Keratinocyte (primary cell): ENCODE measurements at regions of chr7 and their contacts with region 1.

Region 1: DNA sequence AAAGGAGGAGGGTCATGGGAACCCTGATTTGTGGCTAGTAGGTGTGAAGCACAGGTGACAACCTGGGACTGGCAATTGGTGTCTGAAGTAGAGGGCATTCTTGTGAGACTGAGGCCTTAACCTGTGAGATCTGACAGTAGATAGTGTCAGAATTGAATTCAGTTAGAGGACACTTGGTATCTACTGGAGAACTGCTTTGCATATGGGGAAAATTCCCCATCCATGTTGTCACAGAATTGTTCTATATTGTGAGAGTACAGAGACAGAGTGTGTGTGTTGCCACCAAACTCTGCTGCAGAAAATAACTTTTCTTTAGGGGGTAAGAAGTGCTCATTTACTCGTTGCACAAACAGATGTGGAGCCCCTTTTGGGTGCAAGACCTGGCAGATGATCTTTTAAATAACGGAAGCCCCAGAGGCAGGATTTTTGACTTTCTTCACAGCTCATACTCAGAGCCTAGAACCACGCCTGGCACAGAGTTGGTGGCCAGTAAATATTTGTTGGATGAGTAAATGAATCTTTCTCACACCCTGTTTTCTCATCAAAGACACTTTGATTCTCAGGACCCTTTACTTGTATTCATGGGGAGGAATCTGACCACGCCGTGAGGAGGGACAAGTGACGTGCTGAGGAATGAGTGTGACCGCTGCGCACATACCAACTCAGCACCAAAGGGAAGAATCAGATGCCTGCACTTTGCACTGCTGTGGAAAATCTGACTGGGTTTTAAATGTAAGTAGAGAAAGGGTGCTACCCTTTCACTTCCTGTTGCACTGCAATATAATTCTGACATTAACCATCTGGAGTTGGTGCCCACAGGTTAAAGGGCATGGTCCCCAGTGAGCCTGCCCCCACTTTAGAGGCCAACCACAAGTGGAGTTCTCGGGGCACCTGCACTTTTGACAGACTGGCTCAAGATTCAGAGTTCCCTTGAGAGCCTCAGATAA is 39.2 kb upstream of the SDHAF3 start:
- DNase-seq: no peak
- H3K4me3 ChIP-seq: no peak overlapping the region
- H3K27ac ChIP-seq: no peak overlapping the region
- H3K4me1 ChIP-seq: no peaks in the 10 kb centered on the region
- H3K27me3 ChIP-seq: no peaks in the 10 kb centered on the region
- CTCF ChIP-seq: no peak

Region 2: DNA sequence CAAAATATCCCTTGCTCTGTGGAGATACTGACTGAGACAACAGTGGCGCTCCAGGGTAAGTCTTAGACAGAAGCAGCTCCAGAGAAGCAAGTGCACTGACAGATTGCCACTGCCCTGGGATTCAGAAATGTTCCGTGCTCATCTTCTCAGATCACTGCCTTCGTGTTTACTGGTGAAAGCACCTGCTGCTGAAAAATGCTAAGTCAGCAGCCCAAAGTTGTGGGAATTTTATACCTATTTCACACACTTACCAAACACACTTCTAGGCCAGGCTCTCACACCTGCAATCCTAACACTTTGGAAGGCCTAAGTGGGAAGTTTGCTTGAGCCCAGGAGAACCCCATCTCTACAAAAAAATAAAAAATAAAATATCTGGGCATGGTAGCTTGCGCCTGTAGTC is 136.2 kb before region 1 on chr7:
- dilution Hi-C with region 1: no loop called
- DNase-seq: no peak
- H3K4me3 ChIP-seq: no peak overlapping the region
- H3K27ac ChIP-seq: no peak overlapping the region
- H3K4me1 ChIP-seq: no peaks in the 10 kb centered on the region
- H3K27me3 ChIP-seq: no peaks in the 10 kb centered on the region
- CTCF ChIP-seq: no peak

Region 3: GRCh38 chr7:97117372-97118188 is 39.3 kb after region 1 on chr7 and contains the start of gene SDHAF3:
- dilution Hi-C with region 1: no loop called
- DNase-seq: peak; percentile 83
- H3K4me3 ChIP-seq: peak within 1 kb of the TSS; percentile 95 to 99 (median 98)
- H3K27ac ChIP-seq: peak within 1 kb of the TSS; percentile 84
- H3K4me1 ChIP-seq: peaks cover 2% of the 10 kb centered on the region
- H3K27me3 ChIP-seq: no peaks in the 10 kb centered on the region
- CTCF ChIP-seq: peak in 2 of 3 experiments; percentile 21 to 50
- polyA plus RNA-seq, gene SDHAF3: 16.9 to 32.8 TPM (median 18.4 TPM) in 3 replicates

Region 4: GRCh38 chr7:97872025-97872669 is 793.9 kb after region 1 on chr7 and contains the start of gene ASNS:
- dilution Hi-C with region 1: loop called (anchors 25 kb)
- DNase-seq: peak; percentile 48
- H3K4me3 ChIP-seq: peak within 1 kb of the TSS; percentile 60 to 87 (median 85)
- H3K27ac ChIP-seq: peak within 1 kb of the TSS; percentile 61
- H3K4me1 ChIP-seq: peaks cover 6% of the 10 kb centered on the region
- H3K27me3 ChIP-seq: no peaks in the 10 kb centered on the region
- CTCF ChIP-seq: no peak
- polyA plus RNA-seq, gene ASNS: 9.7 to 24.3 TPM (median 20.4 TPM) in 3 replicates